ENCODE measurements at regions of chr14 and their contacts with region 1.

Region 1: GRCh38 chr14:105527661-105528581 is 1.5 kb downstream of the TMEM121 start:
- DNase-seq: peak; percentile 82 to 86 (median 85)
- ATAC-seq: peak; percentile 87
- H3K4me3 ChIP-seq: no peak overlapping the region
- H3K4me1 ChIP-seq: peaks cover 29% of the 10 kb centered on the region
- CTCF ChIP-seq: peak; percentile 88

Region 2: DNA sequence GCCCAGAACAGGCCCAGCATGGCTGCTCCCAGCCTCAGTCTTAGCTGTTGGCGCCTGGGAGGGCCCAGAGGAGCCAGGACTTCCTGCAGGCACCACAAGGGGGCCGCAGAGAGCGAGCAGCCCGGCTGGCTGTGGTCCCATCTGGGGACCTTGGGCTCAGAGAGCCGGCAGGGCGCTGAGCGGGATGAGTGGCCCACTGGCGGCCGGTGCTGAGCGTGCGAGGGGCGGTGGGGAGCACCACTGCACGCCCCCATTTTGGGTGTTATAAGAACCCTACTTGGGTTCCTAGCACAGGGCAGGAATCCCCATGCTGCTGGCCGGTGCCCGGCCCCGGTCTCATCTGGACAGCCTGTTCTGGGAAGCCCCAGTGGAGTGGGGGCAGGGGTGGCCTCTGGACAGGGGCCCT is 79.2 kb before region 1 on chr14:
- intact Hi-C with region 1: loop called in 1 of 2 experiments (anchors 10 kb)
- DNase-seq: peak; percentile 61 to 76 (median 73)
- ATAC-seq: peak; percentile 89
- H3K4me3 ChIP-seq: no peak overlapping the region
- H3K4me1 ChIP-seq: no peaks in the 10 kb centered on the region
- CTCF ChIP-seq: peak; percentile 88

Region 3: DNA sequence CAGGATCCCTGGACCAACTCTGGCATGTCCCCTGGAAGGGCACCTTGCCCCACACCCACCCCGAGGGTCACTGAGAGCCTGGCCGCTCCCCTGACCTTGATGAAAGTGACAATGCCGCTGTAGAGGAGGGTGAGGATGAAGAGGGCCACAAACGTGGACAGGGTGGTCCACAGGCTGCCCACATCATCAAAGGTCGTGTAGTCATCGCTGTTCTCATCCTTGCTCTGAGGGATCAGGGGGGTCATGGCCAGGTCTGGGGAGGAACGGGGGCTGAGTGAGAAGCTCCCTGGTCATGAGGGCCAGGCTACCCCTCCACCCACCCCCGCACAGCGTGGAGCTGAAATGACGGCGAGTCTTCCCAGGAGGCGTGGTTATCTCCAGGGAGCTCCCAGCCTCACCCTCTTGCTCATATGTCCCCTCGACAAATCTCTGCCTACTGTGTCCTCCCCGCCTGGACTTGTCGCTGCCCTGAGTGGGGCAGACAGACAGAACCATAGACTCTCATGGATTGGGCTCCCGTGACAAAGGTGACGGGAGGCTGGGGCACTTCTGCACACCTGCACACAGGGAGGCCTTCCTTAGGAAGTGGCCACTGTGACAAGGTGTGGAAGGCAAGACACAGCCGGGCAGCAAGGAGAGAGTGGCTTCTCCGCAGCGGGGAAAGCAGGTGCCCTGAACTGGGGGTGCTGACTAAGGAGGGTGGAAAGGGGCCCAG is 309.6 kb after region 1 on chr14:
- intact Hi-C with region 1: no loop called
- DNase-seq: no peak
- ATAC-seq: no peak
- H3K4me3 ChIP-seq: no peak overlapping the region
- H3K4me1 ChIP-seq: no peaks in the 10 kb centered on the region
- CTCF ChIP-seq: no peak